Caco-2 (cell line): ENCODE measurements at regions of chr13 and their contacts with region 1.

Region 1: GRCh38 chr13:94660695-94661326 is 51.5 kb downstream of the SOX21 start:
- DNase-seq: peak; percentile 60 to 72
- H3K4me3 ChIP-seq: no peak overlapping the region
- H3K4me3 Mint-ChIP-seq: peak overlapping the region; percentile 0
- H3K27ac Mint-ChIP-seq: no peak overlapping the region
- H3K4me1 ChIP-seq: no peaks in the 10 kb centered on the region
- H3K4me1 Mint-ChIP-seq: peaks cover 12% of the 10 kb centered on the region
- H3K27me3 ChIP-seq: no peaks in the 10 kb centered on the region; the same call in 1 of the 2 replicates
- H3K27me3 Mint-ChIP-seq: peaks cover 20% of the 10 kb centered on the region
- CTCF ChIP-seq: peak in 1 of 2 experiments; percentile 51

Region 2: GRCh38 chr13:94537740-94538630 is 122.8 kb before region 1 on chr13:
- CTCF ChIA-PET with region 1: no interaction called
- POLR2A ChIA-PET with region 1: no interaction called
- intact Hi-C with region 1: no loop called
- DNase-seq: no peak
- H3K4me3 ChIP-seq: no peak overlapping the region
- H3K4me3 Mint-ChIP-seq: no peak overlapping the region
- H3K27ac Mint-ChIP-seq: no peak overlapping the region
- H3K4me1 ChIP-seq: no peaks in the 10 kb centered on the region
- H3K4me1 Mint-ChIP-seq: no peaks in the 10 kb centered on the region
- H3K27me3 ChIP-seq: no peaks in the 10 kb centered on the region; the same call in 1 of the 2 replicates
- H3K27me3 Mint-ChIP-seq: peaks cover 17% of the 10 kb centered on the region
- CTCF ChIP-seq: no peak

Region 3: GRCh38 chr13:94620286-94620896 is 40.4 kb before region 1 on chr13:
- CTCF ChIA-PET with region 1: interaction called, 5 read pairs
- POLR2A ChIA-PET with region 1: no interaction called
- intact Hi-C with region 1: loop called (anchors 1 kb)
- DNase-seq: peak in 1 of 2 experiments; percentile 57
- H3K4me3 ChIP-seq: no peak overlapping the region
- H3K4me3 Mint-ChIP-seq: no peak overlapping the region
- H3K27ac Mint-ChIP-seq: no peak overlapping the region
- H3K4me1 ChIP-seq: no peaks in the 10 kb centered on the region
- H3K4me1 Mint-ChIP-seq: no peaks in the 10 kb centered on the region
- H3K27me3 ChIP-seq: no peaks in the 10 kb centered on the region
- H3K27me3 Mint-ChIP-seq: no peaks in the 10 kb centered on the region
- CTCF ChIP-seq: peak; percentile 80 to 89

Region 4: DNA sequence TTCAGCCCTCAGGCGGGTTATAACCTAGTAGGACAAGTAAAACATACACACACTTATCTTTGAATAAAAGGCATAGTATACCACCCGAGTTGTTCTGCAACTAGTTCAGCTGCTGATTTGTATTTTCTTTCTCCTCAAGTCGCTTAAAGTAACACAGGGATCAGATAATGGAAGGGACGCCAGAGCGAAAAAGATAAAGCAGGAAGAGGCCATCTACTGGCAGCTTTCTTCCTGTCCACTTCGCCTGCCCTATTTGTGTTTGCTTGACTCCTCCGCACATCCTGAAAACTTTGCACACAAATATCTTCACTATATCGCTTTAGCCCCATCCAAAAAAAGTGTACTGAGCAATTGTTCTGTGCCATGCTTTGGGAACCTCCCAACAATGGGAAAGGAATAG is 289.5 kb after region 1 on chr13:
- CTCF ChIA-PET with region 1: no interaction called
- POLR2A ChIA-PET with region 1: no interaction called
- intact Hi-C with region 1: loop called (anchors 1 kb)
- DNase-seq: peak in 1 of 2 experiments; percentile 22
- H3K4me3 ChIP-seq: no peak overlapping the region
- H3K4me3 Mint-ChIP-seq: no peak overlapping the region
- H3K27ac Mint-ChIP-seq: no peak overlapping the region
- H3K4me1 ChIP-seq: 0 out of 2 replicates have a peak, but pooled peaks cover 3% of the 10 kb centered on the region
- H3K4me1 Mint-ChIP-seq: no peaks in the 10 kb centered on the region
- H3K27me3 ChIP-seq: no peaks in the 10 kb centered on the region; the same call in 1 of the 2 replicates
- H3K27me3 Mint-ChIP-seq: peaks cover 19% of the 10 kb centered on the region
- CTCF ChIP-seq: peak in 1 of 2 experiments; percentile 53

Region 5: GRCh38 chr13:95156208-95156607 is 495.4 kb after region 1 on chr13:
- CTCF ChIA-PET with region 1: no interaction called
- POLR2A ChIA-PET with region 1: no interaction called
- intact Hi-C with region 1: loop called (anchors 2 kb)
- DNase-seq: no peak
- H3K4me3 ChIP-seq: no peak overlapping the region
- H3K4me3 Mint-ChIP-seq: no peak overlapping the region
- H3K27ac Mint-ChIP-seq: no peak overlapping the region
- H3K4me1 ChIP-seq: 0 out of 2 replicates have a peak, but pooled peaks cover 4% of the 10 kb centered on the region
- H3K4me1 Mint-ChIP-seq: no peaks in the 10 kb centered on the region
- H3K27me3 ChIP-seq: no peaks in the 10 kb centered on the region
- H3K27me3 Mint-ChIP-seq: no peaks in the 10 kb centered on the region
- CTCF ChIP-seq: peak; percentile 18 to 35